ENCODE measurements at regions of chr13 and their contacts with region 1.

Region 1: GRCh38 chr13:74062933-74063332 is 71.3 kb downstream of the KLF12 start:
- DNase-seq: peak; percentile 34
- ATAC-seq: peak; percentile 50
- H3K4me3 ChIP-seq: peak overlapping the region in 3 of 5 experiments; percentile 21 to 49 (median 22)
- H3K4me3 Mint-ChIP-seq: peak overlapping the region; percentile 83
- H3K27ac ChIP-seq: peak overlapping the region; percentile 63 to 81
- H3K27ac Mint-ChIP-seq: peak overlapping the region; percentile 88
- H3K4me1 ChIP-seq: peaks cover 49 to 59% of the 10 kb centered on the region in 2 donors
- H3K4me1 Mint-ChIP-seq: peaks cover 81% of the 10 kb centered on the region
- H3K27me3 ChIP-seq: no peaks in the 10 kb centered on the region
- H3K27me3 Mint-ChIP-seq: no peaks in the 10 kb centered on the region
- CTCF ChIP-seq: no peak

Region 2: GRCh38 chr13:74098077-74098476 is 35.1 kb after region 1 on chr13:
- CTCF ChIA-PET with region 1: interaction called, 3 read pairs
- POLR2A ChIA-PET with region 1: interaction called, 5 read pairs
- intact Hi-C with region 1: loop called (anchors 5 kb)
- DNase-seq: no peak
- ATAC-seq: no peak
- H3K4me3 ChIP-seq: no peak overlapping the region
- H3K4me3 Mint-ChIP-seq: no peak overlapping the region
- H3K27ac ChIP-seq: no peak overlapping the region
- H3K27ac Mint-ChIP-seq: no peak overlapping the region
- H3K4me1 ChIP-seq: peaks cover 9 to 13% of the 10 kb centered on the region in 2 donors
- H3K4me1 Mint-ChIP-seq: peaks cover 49% of the 10 kb centered on the region
- H3K27me3 ChIP-seq: no peaks in the 10 kb centered on the region
- H3K27me3 Mint-ChIP-seq: no peaks in the 10 kb centered on the region
- CTCF ChIP-seq: no peak